GM10248 (cell line): ENCODE measurements at regions of chr20 and their contacts with region 1.

Region 1: GRCh38 chr20:31496761-31497295 is 17.4 kb upstream of the HM13 start:
- DNase-seq: no peak
- CTCF ChIP-seq: no peak

Region 2: DNA sequence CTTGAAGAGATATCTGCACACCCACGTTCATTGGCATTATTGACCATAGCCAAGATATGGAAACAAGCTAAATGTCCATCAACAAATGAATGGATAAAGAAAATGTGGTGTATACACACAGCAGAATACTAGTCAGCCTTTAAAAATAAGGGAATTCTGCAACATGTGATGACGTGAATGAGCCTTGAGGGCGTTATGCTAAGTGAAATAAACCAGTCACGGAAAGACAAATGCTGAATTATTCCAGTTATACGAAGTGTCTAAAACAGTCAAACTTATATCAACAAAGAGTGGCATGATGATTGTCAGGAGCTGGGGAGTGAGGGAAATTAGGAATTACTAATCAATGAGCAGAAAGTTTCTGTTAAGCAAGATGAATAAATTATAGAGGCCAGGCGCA is 82.4 kb before region 1 on chr20:
- CTCF ChIA-PET with region 1: interaction called, 11 read pairs
- POLR2A ChIA-PET with region 1: no interaction called
- DNase-seq: no peak
- CTCF ChIP-seq: no peak

Region 3: DNA sequence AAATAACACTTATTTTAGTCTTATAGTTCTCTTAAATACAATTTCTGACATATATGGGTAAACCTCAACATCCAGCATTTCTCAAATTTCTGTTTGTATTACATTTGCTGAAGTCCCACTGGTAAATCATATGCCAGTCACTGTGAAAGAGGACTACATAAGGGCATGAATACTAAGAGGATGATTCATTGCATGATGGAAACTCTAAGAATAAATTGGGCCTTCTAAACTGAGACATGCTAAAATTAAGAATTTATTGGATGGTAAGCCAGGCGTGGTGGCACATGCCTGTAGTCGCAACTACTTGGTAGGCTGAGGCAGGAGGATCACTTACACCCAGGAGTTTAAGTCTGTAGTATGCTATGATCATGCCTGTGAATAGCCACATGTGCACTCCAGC is 44.3 kb before region 1 on chr20:
- CTCF ChIA-PET with region 1: interaction called, 77 read pairs
- POLR2A ChIA-PET with region 1: no interaction called
- DNase-seq: no peak
- CTCF ChIP-seq: no peak

Region 4: DNA sequence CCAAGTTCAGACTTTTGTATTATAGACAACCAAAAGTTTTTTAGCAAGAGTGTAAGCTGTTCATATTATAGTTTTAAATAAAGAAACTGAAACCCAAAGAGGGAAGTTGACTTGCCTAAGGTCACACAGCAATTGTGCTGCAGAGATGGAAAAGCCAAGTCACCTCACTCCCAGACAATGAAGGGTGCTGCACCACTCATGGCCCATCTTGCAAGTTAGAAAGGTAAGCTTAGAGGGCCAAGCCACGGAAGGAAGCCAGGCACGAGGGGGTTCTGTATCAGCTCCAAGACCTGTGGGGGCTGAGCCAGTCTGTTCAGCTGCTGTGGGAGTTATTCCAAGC is 22.8 kb before region 1 on chr20:
- CTCF ChIA-PET with region 1: interaction called, 13 read pairs
- POLR2A ChIA-PET with region 1: no interaction called
- DNase-seq: peak; percentile 46
- CTCF ChIP-seq: no peak

Region 5: DNA sequence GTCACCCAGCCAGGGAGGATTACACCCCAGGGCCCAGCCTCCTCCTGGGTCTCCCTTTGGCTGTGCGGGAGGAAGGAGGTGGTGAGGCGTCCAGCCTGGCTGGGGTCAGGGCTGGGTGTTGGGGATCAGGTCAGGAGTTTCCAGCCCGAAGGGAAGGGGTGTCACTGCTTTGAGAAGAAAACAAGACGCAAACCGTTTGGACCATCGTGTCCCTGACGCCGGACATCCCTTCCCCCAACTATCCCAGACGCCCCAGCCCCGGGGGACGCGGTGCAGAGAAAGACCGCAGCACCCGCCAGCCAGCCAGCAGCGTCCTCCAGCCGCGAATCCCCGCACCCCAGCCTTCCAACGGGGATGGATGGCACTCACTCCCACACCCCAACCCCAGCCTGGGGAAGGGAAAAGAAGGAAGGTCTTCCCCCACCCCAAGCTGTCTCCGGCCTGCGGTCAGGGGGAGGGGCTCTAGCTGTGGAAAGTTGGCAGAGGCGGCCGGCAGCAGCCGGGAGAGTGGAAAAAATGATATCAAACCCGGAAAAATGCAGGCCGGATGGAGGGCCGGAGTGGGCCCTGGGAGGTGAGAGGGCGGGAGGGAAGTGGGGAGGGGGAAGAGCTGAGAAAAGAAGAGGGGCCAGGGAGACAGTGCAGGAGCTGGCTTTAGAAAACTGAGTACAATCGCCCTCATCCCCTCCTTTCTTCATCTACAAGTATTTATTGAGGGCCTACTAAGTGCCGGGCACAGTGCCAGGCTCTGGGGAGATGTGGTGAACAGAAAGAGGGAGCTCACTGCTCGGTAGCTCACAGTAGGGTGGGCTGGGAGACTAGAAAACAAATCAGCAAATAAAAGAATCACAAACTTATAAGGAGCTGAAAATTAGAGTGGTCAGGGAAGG is 11.1 kb before region 1 on chr20:
- CTCF ChIA-PET with region 1: interaction called, 50 read pairs
- POLR2A ChIA-PET with region 1: no interaction called
- DNase-seq: no peak
- CTCF ChIP-seq: no peak

Region 6: DNA sequence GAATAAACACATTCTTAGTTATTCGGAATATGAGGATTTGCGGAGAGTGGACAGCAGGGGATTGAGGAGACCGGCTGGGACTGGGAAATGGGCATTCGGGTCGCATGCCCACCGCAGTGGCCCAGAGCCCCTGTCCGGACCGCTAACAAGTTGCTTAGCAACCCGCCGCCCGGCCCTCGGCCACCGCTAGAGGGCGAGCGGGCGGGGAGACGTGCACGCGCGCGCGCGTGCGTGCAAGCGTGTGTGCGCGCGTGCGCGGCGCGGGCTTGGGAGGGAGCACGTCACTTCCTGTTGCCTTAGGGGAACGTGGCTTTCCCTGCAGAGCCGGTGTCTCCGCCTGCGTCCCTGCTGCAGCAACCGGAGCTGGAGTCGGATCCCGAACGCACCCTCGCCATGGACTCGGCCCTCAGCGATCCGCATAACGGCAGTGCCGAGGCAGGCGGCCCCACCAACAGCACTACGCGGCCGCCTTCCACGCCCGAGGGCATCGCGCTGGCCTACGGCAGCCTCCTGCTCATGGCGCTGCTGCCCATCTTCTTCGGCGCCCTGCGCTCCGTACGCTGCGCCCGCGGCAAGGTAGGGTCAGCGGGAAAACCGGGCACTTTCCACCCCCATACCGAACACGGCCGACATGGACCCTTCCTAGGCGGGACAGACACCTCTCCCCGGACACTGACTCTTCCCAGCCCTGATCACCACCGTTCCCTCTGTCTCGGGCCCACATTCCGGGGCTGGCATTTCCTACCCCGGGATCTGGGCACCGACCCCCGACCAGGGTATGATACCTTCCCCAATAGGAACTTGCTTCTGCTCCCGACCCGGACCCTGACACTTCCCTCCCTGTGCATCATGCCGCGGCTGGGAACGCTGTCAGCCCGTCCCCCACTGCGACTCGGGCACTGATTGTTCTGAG is 17.6 kb after region 1 on chr20 and contains the start of gene HM13:
- CTCF ChIA-PET with region 1: interaction called, 30 read pairs
- POLR2A ChIA-PET with region 1: no interaction called
- DNase-seq: peak; percentile 96
- CTCF ChIP-seq: peak; percentile 97